ENCODE measurements at regions of chr5 and their contacts with region 1.

Region 1: GRCh38 chr5:4520557-4520956 is 619.6 kb upstream of the ADAMTS16 start:
- DNase-seq: no peak
- ATAC-seq: no peak
- H3K4me3 Mint-ChIP-seq: no peak overlapping the region
- H3K27ac Mint-ChIP-seq: no peak overlapping the region
- H3K4me1 Mint-ChIP-seq: no peaks in the 10 kb centered on the region
- H3K27me3 Mint-ChIP-seq: no peaks in the 10 kb centered on the region

Region 2: GRCh38 chr5:4533457-4534105 is 13.0 kb after region 1 on chr5:
- CTCF ChIA-PET with region 1: no interaction called
- POLR2A ChIA-PET with region 1: no interaction called
- intact Hi-C with region 1: no loop called
- DNase-seq: no peak
- ATAC-seq: no peak
- H3K4me3 Mint-ChIP-seq: no peak overlapping the region
- H3K27ac Mint-ChIP-seq: no peak overlapping the region
- H3K4me1 Mint-ChIP-seq: no peaks in the 10 kb centered on the region
- H3K27me3 Mint-ChIP-seq: no peaks in the 10 kb centered on the region

Region 3: DNA sequence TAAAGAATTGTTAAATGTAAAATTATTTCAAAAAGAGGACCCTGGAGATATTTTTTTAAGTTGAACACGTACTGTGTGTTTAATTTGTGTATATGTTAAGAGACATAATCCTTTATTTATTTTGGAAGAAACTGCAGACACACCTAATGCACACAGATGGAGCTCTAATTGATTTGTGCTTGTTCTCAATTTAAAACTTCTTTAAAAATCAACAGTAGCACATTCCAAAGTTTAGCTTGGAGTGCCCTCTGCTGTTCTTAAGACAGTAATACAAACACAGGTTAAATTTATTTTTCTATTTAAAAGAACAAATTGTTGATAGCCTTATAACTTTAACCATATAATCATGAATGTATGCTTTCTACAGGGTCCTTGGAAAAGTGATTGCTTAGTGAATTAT is 341.9 kb after region 1 on chr5:
- CTCF ChIA-PET with region 1: no interaction called
- POLR2A ChIA-PET with region 1: no interaction called
- intact Hi-C with region 1: loop called in 1 of 2 experiments (anchors 5 kb)
- DNase-seq: no peak
- ATAC-seq: no peak
- H3K4me3 Mint-ChIP-seq: no peak overlapping the region
- H3K27ac Mint-ChIP-seq: no peak overlapping the region
- H3K4me1 Mint-ChIP-seq: no peaks in the 10 kb centered on the region
- H3K27me3 Mint-ChIP-seq: no peaks in the 10 kb centered on the region

Measured in activated CD4-positive, alpha-beta T cell treated with anti-CD3 and anti-CD28 coated beads for 36 hours (primary cell).